ENCODE measurements at regions of chr6 and their contacts with region 1.

Region 1: GRCh38 chr6:137767911-137768690 is 99.0 kb upstream of the TNFAIP3 start:
- DNase-seq: no peak
- H3K4me3 Mint-ChIP-seq: peak overlapping the region; percentile 54
- H3K27ac Mint-ChIP-seq: peak overlapping the region; percentile 94
- H3K4me1 Mint-ChIP-seq: peaks cover 29% of the 10 kb centered on the region
- H3K27me3 Mint-ChIP-seq: no peaks in the 10 kb centered on the region

Region 2: DNA sequence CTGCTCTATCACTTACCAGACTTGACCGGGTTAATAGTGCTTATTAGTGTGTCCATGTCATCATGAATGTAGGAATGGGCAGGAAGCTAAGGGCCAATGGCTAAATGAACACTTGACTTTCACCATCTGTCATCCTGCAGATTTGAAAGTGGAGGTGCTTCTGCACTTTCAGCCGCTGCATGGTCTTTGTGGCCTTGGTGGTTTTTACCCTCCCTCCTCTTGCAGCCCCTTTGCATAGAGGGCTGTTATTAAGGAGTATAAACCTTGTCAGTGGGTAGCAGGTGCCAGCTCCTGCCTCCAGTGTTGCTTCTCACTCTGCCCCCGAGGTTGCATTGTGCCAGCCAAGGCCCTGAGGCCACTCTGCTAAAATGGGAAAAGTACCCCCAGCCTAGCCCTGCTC is 23.2 kb before region 1 on chr6:
- intact Hi-C with region 1: loop called (anchors 2 kb)
- DNase-seq: no peak
- H3K4me3 Mint-ChIP-seq: no peak overlapping the region
- H3K27ac Mint-ChIP-seq: no peak overlapping the region
- H3K4me1 Mint-ChIP-seq: peaks cover 42% of the 10 kb centered on the region
- H3K27me3 Mint-ChIP-seq: no peaks in the 10 kb centered on the region

Region 3: DNA sequence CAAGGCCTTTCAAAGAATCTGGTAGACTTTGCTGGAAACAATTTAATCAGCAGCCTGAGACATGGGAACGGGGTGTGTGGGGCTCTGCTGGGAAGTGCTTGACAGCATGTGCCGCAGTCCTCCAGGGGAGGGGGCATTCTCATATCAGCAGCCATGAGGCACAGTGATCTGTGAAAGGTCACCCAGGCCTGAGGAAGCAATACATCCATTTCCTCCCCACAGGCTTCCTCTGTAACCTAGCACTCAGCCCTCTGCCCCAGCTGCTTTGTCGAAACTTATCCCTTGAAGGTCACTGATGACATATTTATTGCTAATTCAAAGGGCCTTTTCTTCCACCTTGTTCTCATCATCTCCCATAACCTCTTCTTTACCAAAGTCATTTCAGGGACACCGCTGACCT is 202.3 kb after region 1 on chr6:
- intact Hi-C with region 1: no loop called
- DNase-seq: no peak
- H3K4me3 Mint-ChIP-seq: no peak overlapping the region
- H3K27ac Mint-ChIP-seq: peak overlapping the region; percentile 82
- H3K4me1 Mint-ChIP-seq: peaks cover 75% of the 10 kb centered on the region
- H3K27me3 Mint-ChIP-seq: no peaks in the 10 kb centered on the region

Measured in activated T-helper 2 cell treated with anti-CD3 and anti-CD28 coated beads, Interferon-gamma antibody, Interleukin-2, Interleukin-4, amounts not matched to agents 10 μg/mL and 5 μg/mL and 100 μg/mL, durations not matched to agents 14 hours and 24 hours and 36 hours (primary cell).